GM10248 (cell line): ENCODE measurements at regions of chr5 and their contacts with region 1.

Region 1: GRCh38 chr5:56270568-56271392 is 37.6 kb upstream of the ANKRD55 start:
- DNase-seq: peak; percentile 72
- CTCF ChIP-seq: peak; percentile 98

Region 2: DNA sequence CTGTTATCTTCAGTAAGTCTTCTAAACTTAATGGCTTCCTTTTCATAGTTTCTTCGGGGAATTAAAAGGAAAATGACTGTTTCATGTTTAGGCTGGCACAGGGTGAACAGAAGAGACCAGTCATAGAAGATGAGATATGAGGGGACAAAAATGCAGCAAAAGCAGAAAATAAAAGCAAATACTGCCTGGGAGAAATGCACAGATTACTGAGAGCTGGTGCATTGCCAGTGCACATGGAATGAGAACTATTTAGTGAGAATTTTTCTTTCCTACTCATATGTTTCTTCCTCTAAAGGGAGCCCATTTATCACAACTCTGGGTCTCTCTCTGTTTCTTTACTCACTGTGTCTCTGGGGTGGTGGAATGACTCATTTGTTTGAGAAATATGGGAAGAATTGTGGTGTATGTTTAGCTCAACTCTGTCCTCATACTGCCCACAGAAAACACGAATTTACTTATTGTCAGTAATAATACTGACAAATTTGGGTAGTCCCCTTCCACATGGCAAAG is 11.7 kb before region 1 on chr5:
- CTCF ChIA-PET with region 1: interaction called, 15 read pairs
- POLR2A ChIA-PET with region 1: no interaction called
- DNase-seq: no peak
- CTCF ChIP-seq: no peak

Region 3: GRCh38 chr5:56288873-56289601 is 18.3 kb after region 1 on chr5:
- CTCF ChIA-PET with region 1: interaction called, 21 read pairs
- POLR2A ChIA-PET with region 1: no interaction called
- DNase-seq: no peak
- CTCF ChIP-seq: no peak

Region 4: GRCh38 chr5:56833325-56833724 is 562.5 kb after region 1 on chr5:
- CTCF ChIA-PET with region 1: interaction called, 105 read pairs
- POLR2A ChIA-PET with region 1: no interaction called
- DNase-seq: no peak
- CTCF ChIP-seq: no peak

Region 5: GRCh38 chr5:56900858-56901578 is 630.2 kb after region 1 on chr5:
- CTCF ChIA-PET with region 1: interaction called, 10 read pairs
- POLR2A ChIA-PET with region 1: no interaction called
- DNase-seq: peak; percentile 40
- CTCF ChIP-seq: peak; percentile 66